Heart left ventricle (tissue), 16 donors: ENCODE measurements at regions of chr2 and their contacts with region 1.

Region 1: GRCh38 chr2:26577434-26578112 is 63.6 kb downstream of the CIB4 start:
- DNase-seq: peak; percentile 56 to 80 (median 62)
- ATAC-seq: peak; percentile 41 to 84 (median 75)
- H3K4me3 ChIP-seq: no peak overlapping the region
- H3K27ac ChIP-seq: no peak overlapping the region
- H3K4me1 ChIP-seq: no peaks in the 10 kb centered on the region
- H3K27me3 ChIP-seq: peaks cover 0 to 42% (median 18%) of the 10 kb centered on the region in 9 donors
- CTCF ChIP-seq: peak; percentile 86 to 98 (median 96)
- POLR2A ChIP-seq: no peak

Region 2: DNA sequence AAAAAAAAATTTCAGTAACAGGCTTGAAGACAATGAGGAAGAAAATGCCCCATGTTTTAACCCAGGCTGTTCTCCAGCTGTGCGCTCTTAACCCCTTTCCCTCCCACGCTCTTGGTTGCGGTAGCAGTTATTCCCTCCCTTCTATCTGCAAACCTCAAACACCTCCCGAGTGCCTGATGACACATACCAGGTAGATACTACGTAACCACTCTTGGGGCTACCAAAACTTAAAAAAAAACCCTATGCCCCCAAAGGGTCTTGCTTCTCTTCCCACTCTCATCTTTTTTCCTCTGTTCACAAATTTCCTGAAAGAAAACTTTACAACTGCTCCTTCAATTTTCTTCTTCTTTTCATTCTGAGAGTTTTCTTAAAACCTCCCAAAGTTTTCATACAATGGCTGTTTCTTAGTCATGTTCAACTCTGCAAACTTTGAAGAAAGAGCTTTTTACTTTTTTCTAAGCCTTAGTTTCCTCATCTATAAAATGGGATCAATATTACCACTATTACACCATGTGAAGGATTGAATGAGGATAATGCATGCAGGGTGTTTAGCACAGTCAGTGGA is 180.8 kb before region 1 on chr2:
- intact Hi-C with region 1: loop called in 1 of 10 experiments (anchors 10 kb)
- DNase-seq: no peak
- ATAC-seq: no peak
- H3K4me3 ChIP-seq: no peak overlapping the region
- H3K27ac ChIP-seq: no peak overlapping the region
- H3K4me1 ChIP-seq: peaks cover 0 to 4% (median 2%) of the 10 kb centered on the region in 12 donors
- H3K27me3 ChIP-seq: peaks cover 0 to 10% (median 0%) of the 10 kb centered on the region in 9 donors
- CTCF ChIP-seq: no peak
- POLR2A ChIP-seq: no peak

Region 3: GRCh38 chr2:26503231-26503880 is 74.2 kb before region 1 on chr2:
- intact Hi-C with region 1: loop called in 6 of 10 experiments (anchors 5 to 10 kb)
- DNase-seq: peak; percentile 63 to 88 (median 71)
- ATAC-seq: peak; percentile 80 to 95 (median 93)
- H3K4me3 ChIP-seq: peak overlapping the region in 10 of 12 donors; percentile 19 to 54 (median 46)
- H3K27ac ChIP-seq: no peak overlapping the region
- H3K4me1 ChIP-seq: peaks cover 0 to 12% (median 5%) of the 10 kb centered on the region in 12 donors
- H3K27me3 ChIP-seq: peaks cover 0 to 14% (median 0%) of the 10 kb centered on the region in 9 donors
- CTCF ChIP-seq: peak; percentile 60 to 90 (median 78)
- POLR2A ChIP-seq: no peak

Region 4: DNA sequence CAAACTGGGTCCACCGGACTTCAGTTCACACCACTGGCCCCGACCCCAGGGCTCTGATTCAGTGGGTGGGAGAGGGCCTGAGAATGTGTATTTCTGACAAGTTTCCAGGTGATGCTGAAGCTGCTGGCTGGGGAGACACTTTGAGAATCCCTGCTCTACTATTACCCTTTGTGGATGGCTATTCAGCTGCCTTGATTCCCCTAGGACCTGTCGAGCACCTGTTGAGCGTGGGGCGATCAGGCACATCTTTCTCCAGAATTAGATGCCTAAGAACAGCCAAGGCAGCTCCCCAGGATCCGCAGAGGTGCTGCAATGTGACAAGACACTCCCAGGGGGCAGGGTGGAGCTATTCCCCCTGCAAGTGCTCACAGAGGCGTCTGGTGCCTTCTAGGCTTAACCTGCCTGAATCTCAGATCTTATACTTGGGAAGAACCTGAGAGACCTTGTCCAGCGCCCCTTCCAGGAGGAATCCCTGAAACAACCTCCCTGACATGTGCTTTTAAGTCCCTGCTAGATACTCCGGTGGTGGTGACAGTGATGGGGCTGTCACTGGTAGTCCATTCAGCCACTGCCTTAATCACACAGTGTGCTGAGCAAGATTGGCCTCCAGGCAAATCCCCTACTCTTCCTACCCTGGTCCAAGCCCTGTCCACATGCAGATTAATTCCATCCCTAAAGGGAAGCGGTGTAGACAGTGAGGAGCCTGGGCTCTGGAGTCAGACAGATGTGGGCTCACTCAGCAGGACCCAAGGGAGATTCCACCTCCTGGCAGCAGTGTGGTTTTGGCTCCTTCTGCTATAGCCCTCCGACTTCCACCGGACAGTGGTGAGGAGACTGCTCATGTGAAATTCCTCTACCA is 56.3 kb before region 1 on chr2:
- intact Hi-C with region 1: loop called in 3 of 10 experiments (anchors 5 kb)
- DNase-seq: peak in 1 of 5 donors; percentile 20
- ATAC-seq: no peak
- H3K4me3 ChIP-seq: no peak overlapping the region
- H3K27ac ChIP-seq: no peak overlapping the region
- H3K4me1 ChIP-seq: no peaks in the 10 kb centered on the region
- H3K27me3 ChIP-seq: peaks cover 0 to 33% (median 8%) of the 10 kb centered on the region in 9 donors
- CTCF ChIP-seq: peak in 3 of 12 donors; percentile 8 to 24 (median 21)
- POLR2A ChIP-seq: no peak

Region 5: DNA sequence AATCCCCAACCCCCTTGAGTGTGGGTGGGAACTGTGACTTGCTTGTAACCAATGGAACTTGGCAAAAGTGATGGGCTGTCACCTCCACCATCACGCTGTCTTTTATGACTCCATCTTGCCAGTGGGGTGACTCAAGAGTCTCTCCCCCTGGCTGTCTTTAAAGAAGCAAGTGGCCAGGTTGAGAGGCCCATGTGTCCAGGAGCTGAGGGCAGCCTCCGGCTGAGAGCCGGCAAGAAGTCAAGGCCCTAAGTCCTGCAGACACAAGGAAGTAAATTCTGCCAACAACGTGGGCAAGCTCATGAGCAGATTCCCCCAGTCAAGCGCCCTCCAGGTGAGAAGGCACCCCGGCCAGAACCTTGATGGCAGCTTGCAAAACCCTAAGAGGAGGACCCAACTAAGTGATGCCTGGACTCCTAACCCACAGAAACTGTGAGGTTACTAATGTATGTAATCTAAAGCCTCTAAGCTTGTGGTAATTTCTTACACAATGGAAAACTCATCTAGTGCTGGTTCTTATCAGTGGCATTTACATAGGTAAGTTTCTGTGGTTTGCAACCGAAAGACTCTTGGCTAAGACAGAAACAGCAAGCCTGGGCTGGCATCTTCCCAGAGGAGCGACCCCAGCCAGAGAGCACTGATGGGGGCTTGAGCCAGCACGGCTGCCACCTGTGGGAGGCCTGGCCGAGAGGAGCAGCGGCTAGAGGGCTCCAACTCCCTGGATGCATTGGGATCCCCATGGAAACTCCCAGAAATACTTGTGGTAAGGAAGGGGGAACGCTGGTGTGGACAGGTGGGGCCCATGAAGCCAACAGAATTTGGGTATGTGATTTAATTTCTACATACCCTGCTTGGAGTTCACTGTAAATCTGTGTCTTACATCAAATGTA is 14.3 kb after region 1 on chr2:
- intact Hi-C with region 1: no loop called
- DNase-seq: peak in 1 of 5 donors; percentile 27
- ATAC-seq: no peak
- H3K4me3 ChIP-seq: no peak overlapping the region
- H3K27ac ChIP-seq: no peak overlapping the region
- H3K4me1 ChIP-seq: no peaks in the 10 kb centered on the region
- H3K27me3 ChIP-seq: peaks cover 0 to 57% (median 10%) of the 10 kb centered on the region in 9 donors
- CTCF ChIP-seq: no peak
- POLR2A ChIP-seq: no peak

Region 6: DNA sequence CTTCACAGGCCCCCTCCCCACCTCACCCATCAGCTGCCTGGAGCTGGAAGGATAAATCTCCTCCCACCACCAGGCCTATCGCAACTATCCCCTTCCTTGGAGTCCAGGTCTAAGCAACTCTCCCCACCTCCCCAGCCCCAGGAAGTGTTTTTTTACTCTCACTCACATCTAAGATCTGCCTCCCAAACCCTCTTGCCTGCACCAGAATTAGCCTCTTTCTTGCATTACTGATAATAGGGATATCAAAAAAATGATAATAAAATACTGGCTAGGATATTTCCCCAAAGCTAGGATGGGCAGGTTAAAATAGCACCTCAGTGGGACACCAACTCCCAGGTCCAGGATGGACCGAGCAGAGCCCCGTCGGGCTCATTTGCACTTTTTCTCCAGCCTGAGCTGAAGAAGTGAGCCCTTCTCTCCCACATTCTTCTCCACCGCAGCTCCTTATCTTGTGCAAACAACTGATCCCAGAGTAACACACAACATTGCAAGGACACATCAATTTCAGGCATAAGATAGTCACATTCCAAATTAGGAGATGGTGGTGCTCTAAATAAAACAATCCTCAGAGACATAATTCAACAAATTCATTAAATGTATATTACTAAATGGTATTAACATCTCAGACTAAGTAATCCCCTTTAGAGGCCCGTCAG is 81.2 kb after region 1 on chr2:
- intact Hi-C with region 1: no loop called
- DNase-seq: no peak
- ATAC-seq: no peak
- H3K4me3 ChIP-seq: no peak overlapping the region
- H3K27ac ChIP-seq: no peak overlapping the region
- H3K4me1 ChIP-seq: no peaks in the 10 kb centered on the region
- H3K27me3 ChIP-seq: peaks cover 0 to 8% (median 0%) of the 10 kb centered on the region in 9 donors
- CTCF ChIP-seq: no peak
- POLR2A ChIP-seq: no peak

Region 7: DNA sequence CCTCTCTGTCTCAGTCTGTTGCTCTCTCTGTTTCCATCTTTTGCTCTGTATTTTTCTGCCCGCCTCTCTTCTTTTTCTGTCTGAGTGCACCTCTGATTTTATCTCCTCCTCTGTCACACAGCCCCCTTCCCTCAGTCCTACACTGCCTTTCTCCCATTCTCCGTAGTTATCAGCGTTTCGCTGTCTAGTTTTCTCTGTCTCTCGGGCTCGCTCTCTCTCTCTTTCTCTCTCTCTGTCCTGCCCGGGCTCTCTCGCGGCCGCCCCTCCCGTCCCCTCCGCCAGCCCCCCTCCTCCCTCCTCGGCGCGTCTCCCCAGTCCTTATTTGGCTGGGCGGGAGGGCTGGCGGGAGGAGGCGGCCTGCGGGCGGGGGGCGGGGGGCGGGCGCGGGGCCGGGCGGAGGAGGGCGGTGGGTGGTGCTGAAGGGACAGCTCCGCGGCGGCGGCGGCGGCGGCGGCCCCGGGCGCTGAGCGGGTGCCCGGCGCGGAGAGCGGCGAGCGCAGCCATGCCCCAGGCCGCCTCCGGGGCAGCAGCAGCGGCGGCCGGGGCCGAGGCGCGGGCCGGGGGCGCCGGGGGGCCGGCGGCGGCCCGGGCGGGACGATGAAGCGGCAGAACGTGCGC is 114.8 kb after region 1 on chr2 and contains the start of gene KCNK3:
- intact Hi-C with region 1: no loop called
- DNase-seq: peak; percentile 71 to 83 (median 75)
- ATAC-seq: peak; percentile 71 to 87 (median 82)
- H3K4me3 ChIP-seq: peak within 1 kb of the TSS in 11 of 12 donors; percentile 2 to 48 (median 37)
- H3K27ac ChIP-seq: peak within 1 kb of the TSS in 9 of 12 donors; percentile 39 to 85 (median 63)
- H3K4me1 ChIP-seq: peaks cover 0 to 26% (median 17%) of the 10 kb centered on the region in 12 donors
- H3K27me3 ChIP-seq: peaks cover 0 to 64% (median 32%) of the 10 kb centered on the region in 9 donors
- CTCF ChIP-seq: no peak
- POLR2A ChIP-seq: no peak
- total RNA-seq, gene KCNK3: 0.61 to 12.2 (median 2.1) TPM